ENCODE measurements at regions of chr17 and their contacts with region 1.

Region 1: GRCh38 chr17:45910667-45911066 is 16.3 kb downstream of the MAPT start:
- DNase-seq: no peak
- ATAC-seq: no peak
- H3K4me3 ChIP-seq: no peak overlapping the region
- H3K27ac ChIP-seq: no peak overlapping the region
- H3K4me1 ChIP-seq: no peaks in the 10 kb centered on the region
- H3K27me3 ChIP-seq: 0 out of 2 replicates have a peak, but pooled peaks cover 10% of the 10 kb centered on the region
- CTCF ChIP-seq: no peak

Region 2: DNA sequence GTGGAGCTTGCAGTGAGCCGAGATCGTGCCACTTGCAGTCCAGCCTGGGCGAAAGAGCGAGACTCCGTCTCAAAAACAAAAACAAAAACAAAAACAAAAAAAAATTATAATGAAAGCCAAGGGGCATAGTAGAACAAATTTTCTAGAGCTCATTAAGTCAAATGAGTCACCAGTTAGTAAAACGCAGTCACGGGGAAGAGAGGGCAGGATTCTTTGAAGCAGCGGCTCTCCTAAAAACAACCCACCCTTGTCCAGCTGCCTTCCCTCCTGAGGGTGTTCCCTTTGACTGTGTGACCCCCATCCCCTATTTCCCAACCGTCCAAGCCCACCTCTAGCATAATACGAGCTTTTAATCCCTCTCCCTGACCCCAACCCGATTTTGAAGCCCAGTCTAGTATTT is 44.2 kb after region 1 on chr17:
- CTCF ChIA-PET with region 1: no interaction called
- POLR2A ChIA-PET with region 1: interaction called, 12 read pairs
- intact Hi-C with region 1: no loop called
- DNase-seq: peak; percentile 31
- ATAC-seq: peak; percentile 74
- H3K4me3 ChIP-seq: no peak overlapping the region
- H3K27ac ChIP-seq: no peak overlapping the region
- H3K4me1 ChIP-seq: peaks cover 4% of the 10 kb centered on the region; the same call in 1 of the 2 replicates
- H3K27me3 ChIP-seq: peaks cover 4% of the 10 kb centered on the region; the same call in 1 of the 2 replicates
- CTCF ChIP-seq: no peak

Measured in PC-3 (cell line).